Activated CD8-positive, alpha-beta T cell treated with anti-CD3 and anti-CD28 coated beads, Interleukin-2, amount 10 ng/mL, durations not matched to agents 7 days and 5 days (primary cell): ENCODE measurements at regions of chr17 and their contacts with region 1.

Region 1: GRCh38 chr17:48492401-48493298 is 38.2 kb downstream of the HOXB1 start:
- DNase-seq: peak; percentile 75
- ATAC-seq: peak; percentile 96
- H3K4me3 Mint-ChIP-seq: peak overlapping the region; percentile 65
- H3K27ac Mint-ChIP-seq: no peak overlapping the region
- H3K4me1 Mint-ChIP-seq: peaks cover 39% of the 10 kb centered on the region
- H3K27me3 Mint-ChIP-seq: peaks cover 23% of the 10 kb centered on the region

Region 2: GRCh38 chr17:48465884-48466283 is 26.8 kb before region 1 on chr17:
- CTCF ChIA-PET with region 1: interaction called, 10 read pairs
- POLR2A ChIA-PET with region 1: no interaction called
- DNase-seq: no peak
- ATAC-seq: no peak
- H3K4me3 Mint-ChIP-seq: no peak overlapping the region
- H3K27ac Mint-ChIP-seq: no peak overlapping the region
- H3K4me1 Mint-ChIP-seq: peaks cover 15% of the 10 kb centered on the region
- H3K27me3 Mint-ChIP-seq: peaks cover 16% of the 10 kb centered on the region

Region 3: GRCh38 chr17:48505787-48506645 is 13.4 kb after region 1 on chr17:
- CTCF ChIA-PET with region 1: interaction called, 60 read pairs
- POLR2A ChIA-PET with region 1: no interaction called
- DNase-seq: peak; percentile 79
- ATAC-seq: peak; percentile 97
- H3K4me3 Mint-ChIP-seq: no peak overlapping the region
- H3K27ac Mint-ChIP-seq: peak overlapping the region; percentile 46
- H3K4me1 Mint-ChIP-seq: peaks cover 47% of the 10 kb centered on the region
- H3K27me3 Mint-ChIP-seq: peaks cover 9% of the 10 kb centered on the region

Region 4: GRCh38 chr17:48541577-48542113 is 49.0 kb after region 1 on chr17:
- CTCF ChIA-PET with region 1: interaction called, 28 read pairs
- POLR2A ChIA-PET with region 1: interaction called, 6 read pairs
- DNase-seq: peak; percentile 42
- ATAC-seq: peak; percentile 31
- H3K4me3 Mint-ChIP-seq: peak overlapping the region; percentile 90
- H3K27ac Mint-ChIP-seq: peak overlapping the region; percentile 98
- H3K4me1 Mint-ChIP-seq: peaks cover 45% of the 10 kb centered on the region
- H3K27me3 Mint-ChIP-seq: peaks cover 6% of the 10 kb centered on the region